ENCODE measurements at regions of chr5 and their contacts with region 1.

Region 1: GRCh38 chr5:115246361-115246991 is 16.2 kb downstream of the PGGT1B start:
- DNase-seq: peak; percentile 26
- H3K4me3 ChIP-seq: no peak overlapping the region
- H3K27ac ChIP-seq: no peak overlapping the region
- H3K4me1 ChIP-seq: peaks cover 7% of the 10 kb centered on the region
- H3K27me3 ChIP-seq: no peaks in the 10 kb centered on the region
- CTCF ChIP-seq: peak; percentile 62 to 70

Region 2: DNA sequence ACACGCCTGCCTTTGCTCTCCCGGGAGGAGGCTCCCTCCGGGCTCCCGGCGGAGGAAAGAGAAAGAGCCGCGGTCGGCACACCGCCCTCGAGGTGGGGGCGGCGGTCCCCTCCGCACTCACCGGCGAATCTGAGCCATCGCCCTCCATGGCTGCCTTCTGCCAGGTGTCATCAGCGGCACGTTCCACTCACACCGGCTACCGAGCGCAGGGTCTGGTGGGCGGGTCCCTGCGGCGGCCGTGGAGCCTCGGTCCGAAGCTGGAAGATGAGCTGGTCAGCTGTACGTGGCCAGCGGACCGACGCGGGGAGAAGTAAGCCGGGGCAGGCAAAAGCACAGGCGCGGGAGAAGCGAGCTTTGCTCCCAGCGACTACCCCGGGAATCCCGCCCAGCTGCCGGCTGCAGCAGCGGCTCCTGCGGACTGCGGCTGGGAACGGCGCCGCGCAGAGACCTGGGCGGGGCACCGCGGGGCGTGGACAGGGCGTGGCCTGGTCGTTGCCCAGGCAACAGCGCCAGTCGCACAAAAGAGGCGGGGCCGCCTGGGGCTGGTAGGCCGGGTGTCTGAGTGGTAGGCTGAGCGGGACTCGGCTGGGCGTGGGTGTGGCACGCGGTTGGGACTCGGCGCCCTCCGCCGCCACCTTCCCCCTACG is 76.9 kb before region 1 on chr5 and contains the start of gene TRIM36:
- CTCF ChIA-PET with region 1: no interaction called
- dilution Hi-C with region 1: no loop called
- in situ Hi-C with region 1: no loop called
- intact Hi-C with region 1: loop called (anchors 2 kb)
- DNase-seq: peak; percentile 93
- H3K4me3 ChIP-seq: peak within 1 kb of the TSS; percentile 83 to 99 (median 97)
- H3K27ac ChIP-seq: peak within 1 kb of the TSS; percentile 68
- H3K4me1 ChIP-seq: peaks cover 17% of the 10 kb centered on the region
- H3K27me3 ChIP-seq: peaks cover 5% of the 10 kb centered on the region
- CTCF ChIP-seq: peak in 1 of 2 donors; percentile 48
- total RNA-seq, gene TRIM36: 2.8 to 6.1 TPM

Region 3: GRCh38 chr5:115209279-115209678 is 37.2 kb before region 1 on chr5:
- CTCF ChIA-PET with region 1: no interaction called
- dilution Hi-C with region 1: no loop called
- in situ Hi-C with region 1: no loop called
- intact Hi-C with region 1: no loop called
- DNase-seq: no peak
- H3K4me3 ChIP-seq: no peak overlapping the region
- H3K27ac ChIP-seq: no peak overlapping the region
- H3K4me1 ChIP-seq: no peaks in the 10 kb centered on the region
- H3K27me3 ChIP-seq: no peaks in the 10 kb centered on the region
- CTCF ChIP-seq: no peak